Activated CD4-positive, alpha-beta T cell treated with anti-CD3 and anti-CD28 coated beads, Interleukin-2, amount 10 ng/mL, durations not matched to agents 7 days and 5 days (primary cell): ENCODE measurements at regions of chr12 and their contacts with region 1.

Region 1: GRCh38 chr12:47767216-47767724 is 5.8 kb upstream of the SLC48A1 start:
- DNase-seq: peak; percentile 81
- H3K4me3 Mint-ChIP-seq: no peak overlapping the region
- H3K27ac Mint-ChIP-seq: no peak overlapping the region
- H3K4me1 Mint-ChIP-seq: peaks cover 15% of the 10 kb centered on the region
- H3K27me3 Mint-ChIP-seq: peaks cover 13% of the 10 kb centered on the region

Region 2: DNA sequence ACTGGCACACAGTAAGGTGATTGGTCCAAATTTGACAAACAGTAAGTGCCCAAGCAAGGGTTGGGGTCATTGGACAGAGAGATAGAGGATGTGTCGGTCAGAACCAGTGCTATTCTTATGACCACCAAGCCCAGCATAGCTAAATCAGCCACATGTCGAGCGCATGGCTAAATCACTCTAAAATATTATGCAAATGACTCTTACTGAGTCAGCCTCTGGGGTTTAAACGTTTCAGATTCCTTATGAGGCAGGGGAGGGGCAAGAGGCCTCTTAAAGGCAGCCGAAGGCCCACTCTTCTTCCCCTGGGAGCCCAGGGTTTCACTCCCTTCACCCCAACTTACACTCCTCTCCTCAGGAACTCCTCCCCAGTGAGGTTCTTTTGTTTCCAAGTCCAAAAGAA is 41.4 kb before region 1 on chr12:
- CTCF ChIA-PET with region 1: interaction called, 16 read pairs
- POLR2A ChIA-PET with region 1: no interaction called
- DNase-seq: no peak
- H3K4me3 Mint-ChIP-seq: no peak overlapping the region
- H3K27ac Mint-ChIP-seq: no peak overlapping the region
- H3K4me1 Mint-ChIP-seq: peaks cover 25% of the 10 kb centered on the region
- H3K27me3 Mint-ChIP-seq: no peaks in the 10 kb centered on the region

Region 3: DNA sequence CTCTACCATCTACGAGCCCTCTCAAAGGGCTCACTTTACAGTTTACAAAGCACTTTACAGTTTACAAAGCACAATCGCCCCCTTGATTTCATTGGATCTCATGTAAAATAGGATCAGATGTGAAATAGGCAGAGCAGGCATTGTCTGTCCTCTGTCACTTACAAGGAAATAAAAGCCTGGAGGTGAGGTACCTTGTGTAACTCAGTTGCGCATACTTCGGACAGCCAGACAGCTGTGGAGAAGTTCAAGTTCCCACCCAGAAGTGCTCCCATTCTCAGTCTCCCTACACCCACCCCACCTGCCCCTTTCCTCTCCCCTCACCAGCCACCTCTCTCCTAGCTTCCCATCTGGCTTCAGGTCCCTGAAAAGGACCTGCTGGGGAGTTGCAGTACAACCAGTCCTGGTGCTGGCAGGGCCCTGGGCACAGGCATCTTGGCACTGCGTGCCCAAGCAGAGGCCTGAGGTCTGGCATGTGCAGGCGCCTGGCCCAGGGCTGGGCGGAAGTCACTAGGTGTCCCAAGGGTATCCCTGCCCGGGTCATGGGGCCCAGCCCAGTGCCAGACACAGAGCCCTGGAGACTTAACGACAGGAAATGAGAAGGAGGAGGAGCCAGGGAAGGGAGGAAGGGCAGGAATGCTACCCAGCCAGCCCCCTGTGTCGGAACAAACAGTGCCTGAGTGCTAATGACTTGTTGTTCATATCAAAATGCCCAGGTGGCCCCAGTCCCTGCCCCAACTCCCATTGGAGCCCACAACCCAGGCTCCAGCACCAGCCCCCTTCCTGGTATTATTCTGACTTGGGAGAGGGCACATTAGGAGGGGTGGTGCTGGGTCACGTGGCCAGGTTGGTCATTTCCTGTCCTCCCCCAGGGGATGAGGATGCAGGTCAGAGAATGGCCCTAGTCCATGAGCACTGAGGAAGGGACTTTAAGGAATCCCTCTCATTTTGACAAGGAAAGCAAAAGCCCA is 14.0 kb before region 1 on chr12:
- CTCF ChIA-PET with region 1: interaction called, 162 read pairs
- POLR2A ChIA-PET with region 1: no interaction called
- DNase-seq: no peak
- H3K4me3 Mint-ChIP-seq: no peak overlapping the region
- H3K27ac Mint-ChIP-seq: no peak overlapping the region
- H3K4me1 Mint-ChIP-seq: peaks cover 20% of the 10 kb centered on the region
- H3K27me3 Mint-ChIP-seq: no peaks in the 10 kb centered on the region

Region 4: GRCh38 chr12:47779301-47779942 is 12.2 kb after region 1 on chr12:
- CTCF ChIA-PET with region 1: interaction called, 72 read pairs
- POLR2A ChIA-PET with region 1: no interaction called
- DNase-seq: peak; percentile 94
- H3K4me3 Mint-ChIP-seq: no peak overlapping the region
- H3K27ac Mint-ChIP-seq: peak overlapping the region; percentile 57
- H3K4me1 Mint-ChIP-seq: peaks cover 38% of the 10 kb centered on the region
- H3K27me3 Mint-ChIP-seq: no peaks in the 10 kb centered on the region

Region 5: GRCh38 chr12:47930634-47931033 is 163.4 kb after region 1 on chr12:
- CTCF ChIA-PET with region 1: no interaction called
- POLR2A ChIA-PET with region 1: no interaction called
- DNase-seq: no peak
- H3K4me3 Mint-ChIP-seq: no peak overlapping the region
- H3K27ac Mint-ChIP-seq: no peak overlapping the region
- H3K4me1 Mint-ChIP-seq: no peaks in the 10 kb centered on the region
- H3K27me3 Mint-ChIP-seq: peaks cover 9% of the 10 kb centered on the region